ENCODE measurements at regions of chr14 and their contacts with region 1.

Region 1: GRCh38 chr14:23294734-23295561 is 7.7 kb downstream of the PPP1R3E start:
- DNase-seq: no peak
- ATAC-seq: peak; percentile 92
- H3K4me3 ChIP-seq: no peak overlapping the region
- H3K27ac ChIP-seq: no peak overlapping the region
- H3K4me1 ChIP-seq: 0 out of 2 replicates have a peak, but pooled peaks cover 4% of the 10 kb centered on the region
- H3K27me3 ChIP-seq: no peaks in the 10 kb centered on the region
- CTCF ChIP-seq: peak; percentile 68 to 85 (median 84)
- EP300 ChIP-seq: no peak
- POLR2A ChIP-seq: no peak
- RAD21 ChIP-seq: peak; percentile 52

Region 2: GRCh38 chr14:23209651-23210423 is 85.1 kb before region 1 on chr14:
- CTCF ChIA-PET with region 1: no interaction called
- POLR2A ChIA-PET with region 1: no interaction called
- RAD21 ChIA-PET with region 1: no interaction called
- SMC1A ChIA-PET with region 1: no interaction called
- in situ Hi-C with region 1: no loop called
- intact Hi-C with region 1: no loop called
- DNase-seq: no peak
- ATAC-seq: no peak
- H3K4me3 ChIP-seq: no peak overlapping the region
- H3K27ac ChIP-seq: no peak overlapping the region
- H3K4me1 ChIP-seq: no peaks in the 10 kb centered on the region
- H3K27me3 ChIP-seq: no peaks in the 10 kb centered on the region
- CTCF ChIP-seq: no peak
- EP300 ChIP-seq: no peak
- POLR2A ChIP-seq: no peak
- RAD21 ChIP-seq: no peak

Region 3: GRCh38 chr14:23269193-23269592 is 25.8 kb before region 1 on chr14:
- CTCF ChIA-PET with region 1: interaction called, 35 read pairs
- POLR2A ChIA-PET with region 1: interaction called, 3 read pairs
- RAD21 ChIA-PET with region 1: interaction called, 6 read pairs
- SMC1A ChIA-PET with region 1: interaction called, 4 read pairs
- in situ Hi-C with region 1: no loop called
- intact Hi-C with region 1: loop called (anchors 1 kb)
- DNase-seq: no peak
- ATAC-seq: no peak
- H3K4me3 ChIP-seq: no peak overlapping the region
- H3K27ac ChIP-seq: no peak overlapping the region
- H3K4me1 ChIP-seq: no peaks in the 10 kb centered on the region
- H3K27me3 ChIP-seq: no peaks in the 10 kb centered on the region
- CTCF ChIP-seq: no peak
- EP300 ChIP-seq: no peak
- POLR2A ChIP-seq: no peak
- RAD21 ChIP-seq: no peak

Region 4: GRCh38 chr14:23275412-23275811 is 19.5 kb before region 1 on chr14:
- CTCF ChIA-PET with region 1: interaction called, 35 read pairs
- POLR2A ChIA-PET with region 1: no interaction called
- RAD21 ChIA-PET with region 1: no interaction called
- SMC1A ChIA-PET with region 1: interaction called, 4 read pairs
- in situ Hi-C with region 1: no loop called
- intact Hi-C with region 1: no loop called
- DNase-seq: no peak
- ATAC-seq: no peak
- H3K4me3 ChIP-seq: no peak overlapping the region
- H3K27ac ChIP-seq: no peak overlapping the region
- H3K4me1 ChIP-seq: no peaks in the 10 kb centered on the region
- H3K27me3 ChIP-seq: no peaks in the 10 kb centered on the region; a peak in 1 of 4 replicates
- CTCF ChIP-seq: no peak
- EP300 ChIP-seq: no peak
- POLR2A ChIP-seq: no peak
- RAD21 ChIP-seq: no peak

Region 5: GRCh38 chr14:23306410-23307145 is 11.6 kb after region 1 on chr14 and contains the start of gene BCL2L2:
- CTCF ChIA-PET with region 1: interaction called, 11 read pairs
- POLR2A ChIA-PET with region 1: interaction called, 4 read pairs
- RAD21 ChIA-PET with region 1: no interaction called
- SMC1A ChIA-PET with region 1: interaction called, 3 read pairs
- in situ Hi-C with region 1: no loop called
- intact Hi-C with region 1: no loop called
- DNase-seq: no peak
- ATAC-seq: peak; percentile 65
- H3K4me3 ChIP-seq: peak within 1 kb of the TSS; percentile 100
- H3K27ac ChIP-seq: peak within 1 kb of the TSS; percentile 91
- H3K4me1 ChIP-seq: peaks cover 20% of the 10 kb centered on the region
- H3K27me3 ChIP-seq: no peaks in the 10 kb centered on the region
- CTCF ChIP-seq: no peak
- EP300 ChIP-seq: no peak
- POLR2A ChIP-seq: peak; percentile 91
- RAD21 ChIP-seq: no peak
- polyA plus RNA-seq, gene BCL2L2: 1.4 to 3.1 TPM

Region 6: DNA sequence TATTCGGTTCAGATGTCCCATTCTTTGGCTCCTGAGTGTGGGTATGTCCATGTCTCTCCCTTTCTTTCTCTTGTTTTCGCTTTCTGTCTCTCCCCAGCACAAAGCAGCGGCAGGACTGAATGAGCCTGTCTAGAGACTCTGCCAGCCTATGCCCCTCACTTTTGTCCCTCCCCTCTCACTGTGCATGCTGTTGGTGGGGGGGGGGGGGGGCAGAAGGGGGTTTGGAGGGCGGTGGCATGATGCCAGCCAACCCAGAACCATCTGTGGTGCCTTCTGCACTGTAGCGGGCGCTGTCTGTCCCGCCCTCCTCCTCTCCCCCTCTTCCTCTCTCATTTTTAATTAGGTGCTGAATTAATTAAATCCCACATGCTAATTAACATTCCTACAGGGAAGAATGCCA is 192.3 kb after region 1 on chr14:
- CTCF ChIA-PET with region 1: no interaction called
- POLR2A ChIA-PET with region 1: no interaction called
- RAD21 ChIA-PET with region 1: no interaction called
- SMC1A ChIA-PET with region 1: no interaction called
- in situ Hi-C with region 1: no loop called
- intact Hi-C with region 1: no loop called
- DNase-seq: no peak
- ATAC-seq: no peak
- H3K4me3 ChIP-seq: no peak overlapping the region
- H3K27ac ChIP-seq: no peak overlapping the region
- H3K4me1 ChIP-seq: no peaks in the 10 kb centered on the region
- H3K27me3 ChIP-seq: no peaks in the 10 kb centered on the region
- CTCF ChIP-seq: no peak
- EP300 ChIP-seq: no peak
- POLR2A ChIP-seq: no peak
- RAD21 ChIP-seq: no peak